ENCODE measurements at regions of chr7 and their contacts with region 1.

Region 1: GRCh38 chr7:113159746-113160339 is 41.5 kb upstream of the SMIM30 start:
- DNase-seq: peak; percentile 66
- H3K4me3 ChIP-seq: no peak overlapping the region
- H3K27ac ChIP-seq: no peak overlapping the region
- H3K4me1 ChIP-seq: peaks cover 3% of the 10 kb centered on the region
- H3K27me3 ChIP-seq: no peaks in the 10 kb centered on the region

Region 2: GRCh38 chr7:113414401-113415035 is 254.7 kb after region 1 on chr7:
- in situ Hi-C with region 1: loop called (anchors 10 kb)
- DNase-seq: no peak
- H3K4me3 ChIP-seq: no peak overlapping the region
- H3K27ac ChIP-seq: no peak overlapping the region
- H3K4me1 ChIP-seq: no peaks in the 10 kb centered on the region
- H3K27me3 ChIP-seq: no peaks in the 10 kb centered on the region; the same call in 1 of the 2 replicates